Left ventricle myocardium inferior (tissue), 1 donor: ENCODE measurements at regions of chr3 and their contacts with region 1.

Region 1: DNA sequence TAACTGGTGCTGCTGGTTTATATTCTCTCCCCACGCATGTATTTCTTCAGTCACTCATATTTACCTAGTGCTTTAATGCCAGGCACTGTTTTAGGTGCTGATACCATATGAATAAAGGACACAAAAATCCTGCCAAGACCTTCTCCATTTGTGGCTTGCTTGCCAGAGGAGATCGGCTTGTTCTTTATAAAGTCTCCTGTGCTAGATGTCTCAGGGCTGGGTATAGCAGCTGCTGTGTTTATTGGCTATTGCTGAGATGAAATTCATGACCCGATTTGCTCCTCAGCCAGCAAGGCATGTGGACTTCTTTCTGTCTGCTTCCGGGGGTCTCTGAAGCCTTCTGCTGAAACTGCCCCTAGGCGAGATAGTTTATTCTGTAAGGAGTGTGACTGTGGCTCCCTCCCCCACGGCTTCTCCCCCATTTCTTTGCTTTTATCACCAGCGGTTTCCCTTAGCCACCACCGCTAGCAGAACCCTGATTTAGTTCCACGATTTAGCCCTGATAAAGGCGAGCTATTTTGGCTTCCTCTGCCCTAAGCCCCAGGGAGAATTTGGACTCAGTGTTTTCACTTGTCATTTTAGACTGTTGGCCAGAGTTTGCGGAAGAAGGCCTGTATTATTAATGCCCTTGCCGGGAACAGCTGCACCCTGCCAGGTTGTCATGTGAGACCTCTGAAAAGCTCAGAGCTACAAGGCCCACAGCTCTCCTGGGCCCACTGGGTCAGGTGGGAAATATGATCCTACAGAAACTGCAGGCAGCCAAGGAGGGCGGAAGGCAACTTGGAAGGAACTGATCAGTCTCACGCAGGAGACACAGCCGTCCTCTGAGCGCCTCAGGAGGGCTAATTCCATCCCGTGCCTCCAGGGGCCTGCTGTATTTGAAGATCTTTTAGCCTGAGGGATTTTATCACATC is 46.8 kb downstream of the ST6GAL1 start:
- DNase-seq: peak; percentile 69
- H3K4me3 ChIP-seq: peak overlapping the region; percentile 51
- H3K27ac ChIP-seq: peak overlapping the region; percentile 97
- H3K4me1 ChIP-seq: peaks cover 91% of the 10 kb centered on the region
- H3K27me3 ChIP-seq: no peaks in the 10 kb centered on the region
- CTCF ChIP-seq: peak; percentile 31

Region 2: GRCh38 chr3:186361762-186362536 is 615.1 kb before region 1 on chr3 and contains the start of gene DGKG:
- intact Hi-C with region 1: no loop called
- DNase-seq: peak; percentile 69
- H3K4me3 ChIP-seq: peak within 1 kb of the TSS; percentile 73
- H3K27ac ChIP-seq: peak within 1 kb of the TSS; percentile 81
- H3K4me1 ChIP-seq: peaks cover 72% of the 10 kb centered on the region
- H3K27me3 ChIP-seq: peaks cover 41% of the 10 kb centered on the region
- CTCF ChIP-seq: no peak
- total RNA-seq, gene DGKG: 65.7 TPM

Region 3: GRCh38 chr3:186930641-186931531 is 46.2 kb before region 1 on chr3:
- intact Hi-C with region 1: loop called (anchors 5 kb)
- DNase-seq: peak; percentile 75
- H3K4me3 ChIP-seq: peak overlapping the region; percentile 92
- H3K27ac ChIP-seq: peak overlapping the region; percentile 98
- H3K4me1 ChIP-seq: peaks cover 68% of the 10 kb centered on the region
- H3K27me3 ChIP-seq: no peaks in the 10 kb centered on the region
- CTCF ChIP-seq: peak; percentile 38